Activated T-helper 1 cell treated with anti-CD3 and anti-CD28 coated beads, Interleukin-12 subunit alpha, Interleukin-12 subunit beta, Interleukin-2, Interleukin-4 antibody, amounts not matched to agents 30 ng/mL and 10 ng/mL and 1 ng/mL, durations not matched to agents 14 hours and 24 hours and 36 hours (primary cell): ENCODE measurements at regions of chr1 and their contacts with region 1.

Region 1: DNA sequence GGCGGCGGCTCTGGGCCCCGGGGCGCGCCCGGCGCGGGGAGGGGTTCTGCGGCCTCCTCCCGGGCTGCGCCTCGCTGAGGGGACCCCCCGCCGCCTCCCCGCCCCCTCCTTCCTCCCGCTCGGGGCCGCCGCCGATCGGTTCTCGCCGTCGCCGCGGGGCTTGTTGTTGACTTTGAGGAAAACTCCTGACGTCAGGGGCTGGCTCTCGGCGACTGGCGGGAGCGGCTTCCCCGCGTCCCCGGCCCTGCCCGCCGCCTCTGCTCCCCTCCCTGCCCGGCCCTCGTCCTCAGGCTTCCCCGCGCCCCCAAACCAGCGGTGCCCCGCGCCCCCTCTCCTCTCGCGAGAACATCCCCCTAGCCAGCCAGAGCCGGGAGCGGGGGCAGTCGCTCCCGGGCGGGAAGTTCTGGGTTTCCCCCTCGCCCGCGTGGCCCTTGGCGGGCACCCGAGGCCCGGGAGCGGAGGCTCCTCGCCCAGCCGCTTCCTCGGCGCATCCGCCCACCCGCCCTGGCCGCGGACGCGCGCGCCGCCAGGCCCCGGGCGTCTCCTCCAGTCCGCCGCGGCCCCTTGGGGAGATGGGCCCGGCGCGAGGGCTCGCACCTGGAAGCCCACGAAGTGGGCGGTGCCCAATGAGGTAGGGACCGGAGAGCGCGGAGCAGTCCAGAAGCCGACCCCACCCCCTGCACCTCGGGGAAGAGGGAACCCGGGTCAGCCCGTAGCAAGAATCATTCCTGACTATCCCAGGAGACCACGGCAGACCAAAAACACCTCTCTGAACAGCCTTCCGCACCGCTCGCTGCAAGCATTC is 611 bp upstream of the AKT3 start:
- DNase-seq: peak; percentile 74
- H3K4me3 Mint-ChIP-seq: peak overlapping the region; percentile 87
- H3K27ac Mint-ChIP-seq: peak overlapping the region; percentile 84
- H3K4me1 Mint-ChIP-seq: peaks cover 20% of the 10 kb centered on the region
- H3K27me3 Mint-ChIP-seq: peaks cover 37% of the 10 kb centered on the region

Region 2: DNA sequence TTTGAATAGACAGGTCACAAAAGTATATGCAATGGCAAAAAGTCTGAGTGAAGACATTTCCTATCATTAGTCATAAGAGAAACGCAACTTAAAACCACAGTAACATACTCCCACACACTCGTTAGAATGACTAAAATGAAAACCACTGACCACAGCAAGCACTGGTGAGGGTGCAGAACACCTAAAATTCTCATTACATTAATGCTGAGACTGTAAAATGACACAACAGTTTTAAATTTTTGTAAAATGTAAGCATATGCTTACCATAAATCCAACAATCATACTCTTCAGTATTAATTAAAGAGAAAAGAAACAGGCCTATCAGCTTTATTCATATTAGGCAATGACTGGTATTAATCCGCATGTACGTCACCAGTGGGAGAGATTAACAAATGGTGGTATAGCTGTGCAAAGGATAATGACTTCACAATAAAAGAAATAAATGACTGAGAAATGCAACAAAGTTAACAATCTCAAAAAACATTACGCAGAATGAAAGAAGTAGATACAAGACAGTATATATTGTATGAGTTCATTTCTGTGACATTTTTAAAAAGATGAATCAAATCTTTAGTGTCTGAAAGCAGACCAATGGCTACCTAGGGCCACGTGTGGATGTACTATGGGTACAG is 254.1 kb before region 1 on chr1:
- intact Hi-C with region 1: loop called (anchors 1 kb)
- DNase-seq: peak; percentile 32
- H3K4me3 Mint-ChIP-seq: peak overlapping the region; percentile 75
- H3K27ac Mint-ChIP-seq: peak overlapping the region; percentile 94
- H3K4me1 Mint-ChIP-seq: peaks cover 32% of the 10 kb centered on the region
- H3K27me3 Mint-ChIP-seq: no peaks in the 10 kb centered on the region

Region 3: GRCh38 chr1:243791586-243792267 is 58.9 kb before region 1 on chr1:
- intact Hi-C with region 1: no loop called
- DNase-seq: no peak
- H3K4me3 Mint-ChIP-seq: no peak overlapping the region
- H3K27ac Mint-ChIP-seq: no peak overlapping the region
- H3K4me1 Mint-ChIP-seq: peaks cover 21% of the 10 kb centered on the region
- H3K27me3 Mint-ChIP-seq: no peaks in the 10 kb centered on the region

Region 4: DNA sequence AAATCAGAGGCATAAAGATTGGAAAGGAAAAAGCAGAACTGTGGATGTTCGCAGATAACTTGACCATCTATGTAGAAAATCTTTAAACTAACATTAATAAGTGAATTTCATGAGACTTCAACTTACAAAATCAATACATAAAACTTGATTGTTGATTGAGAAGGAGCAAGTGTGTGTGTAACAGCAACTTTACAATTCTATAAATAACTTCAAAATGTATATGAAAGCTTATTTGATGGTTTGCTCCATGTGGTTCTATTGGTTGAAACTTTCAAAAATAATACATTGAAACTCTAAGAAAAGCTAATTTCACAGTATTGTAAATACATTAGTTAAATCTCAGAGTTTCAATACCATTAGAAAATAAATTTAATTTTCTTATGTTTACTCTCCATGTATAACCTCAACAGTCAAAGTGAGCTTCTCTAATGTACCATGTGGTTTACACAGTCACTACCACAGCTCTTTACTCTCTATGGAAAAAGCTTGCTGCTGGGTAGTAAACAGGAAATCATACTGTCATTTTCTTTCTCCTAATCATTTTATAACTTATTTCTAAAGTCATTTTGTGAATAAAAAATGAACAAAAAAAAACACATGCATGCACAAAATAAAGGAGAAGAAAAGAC is 12.6 kb before region 1 on chr1:
- intact Hi-C with region 1: loop called (anchors 1 kb)
- DNase-seq: no peak
- H3K4me3 Mint-ChIP-seq: peak overlapping the region; percentile 9
- H3K27ac Mint-ChIP-seq: peak overlapping the region; percentile 34
- H3K4me1 Mint-ChIP-seq: peaks cover 33% of the 10 kb centered on the region
- H3K27me3 Mint-ChIP-seq: no peaks in the 10 kb centered on the region

Region 5: GRCh38 chr1:244296447-244296846 is 445.8 kb after region 1 on chr1:
- intact Hi-C with region 1: loop called (anchors 5 kb)
- DNase-seq: no peak
- H3K4me3 Mint-ChIP-seq: no peak overlapping the region
- H3K27ac Mint-ChIP-seq: no peak overlapping the region
- H3K4me1 Mint-ChIP-seq: peaks cover 7% of the 10 kb centered on the region
- H3K27me3 Mint-ChIP-seq: peaks cover 3% of the 10 kb centered on the region

Region 6: GRCh38 chr1:244652699-244653466 is 802.2 kb after region 1 on chr1 and contains the start of gene DESI2:
- intact Hi-C with region 1: loop called (anchors 5 kb)
- DNase-seq: peak; percentile 98
- H3K4me3 Mint-ChIP-seq: peak within 1 kb of the TSS; percentile 83
- H3K27ac Mint-ChIP-seq: peak within 1 kb of the TSS; percentile 75
- H3K4me1 Mint-ChIP-seq: peaks cover 18% of the 10 kb centered on the region
- H3K27me3 Mint-ChIP-seq: no peaks in the 10 kb centered on the region
- total RNA-seq, gene DESI2: 31.1 and 32.8 TPM in 2 replicates